Endothelial cell of umbilical vein (primary cell): ENCODE measurements at regions of chr6 and their contacts with region 1.

Region 1: DNA sequence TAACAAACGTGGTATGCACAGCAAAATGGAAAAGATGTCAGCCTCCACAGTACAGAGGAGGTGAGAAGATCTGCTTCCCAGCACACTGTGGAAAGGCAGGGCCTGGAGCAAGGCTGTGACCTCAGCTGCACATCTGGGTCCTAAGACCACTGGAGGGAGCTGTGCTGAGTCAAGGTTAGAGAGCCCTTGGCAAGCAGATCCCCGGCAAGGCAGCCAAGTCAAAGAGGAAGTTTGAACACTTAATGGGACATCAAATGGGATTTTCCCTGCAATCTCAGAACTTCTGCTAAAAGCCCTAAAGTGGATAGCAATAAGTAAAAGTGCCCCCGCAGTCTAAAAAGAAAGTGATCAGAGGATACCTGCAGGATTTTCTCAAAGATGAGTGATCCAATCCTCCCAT is 39.5 kb downstream of the UNC5CL start:
- DNase-seq: peak; percentile 44
- H3K4me3 ChIP-seq: no peak overlapping the region
- H3K27ac ChIP-seq: no peak overlapping the region
- H3K4me1 ChIP-seq: peaks cover 24% of the 10 kb centered on the region
- H3K27me3 ChIP-seq: peaks cover 0 to 5% of the 10 kb centered on the region in 2 experiments
- CTCF ChIP-seq: peak; percentile 34 to 55
- POLR2A ChIP-seq: no peak

Region 2: GRCh38 chr6:39426088-39426456 is 1573.5 kb before region 1 on chr6:
- CTCF ChIA-PET with region 1: no interaction called
- POLR2A ChIA-PET with region 1: no interaction called
- dilution Hi-C with region 1: no loop called
- intact Hi-C with region 1: loop called (anchors 5 kb)
- DNase-seq: peak; percentile 95
- H3K4me3 ChIP-seq: no peak overlapping the region
- H3K27ac ChIP-seq: peak overlapping the region; percentile 69
- H3K4me1 ChIP-seq: peaks cover 14% of the 10 kb centered on the region
- H3K27me3 ChIP-seq: no peaks in the 10 kb centered on the region
- CTCF ChIP-seq: no peak
- POLR2A ChIP-seq: no peak

Region 3: GRCh38 chr6:40774932-40775331 is 224.6 kb before region 1 on chr6:
- CTCF ChIA-PET with region 1: no interaction called
- POLR2A ChIA-PET with region 1: no interaction called
- dilution Hi-C with region 1: no loop called
- intact Hi-C with region 1: no loop called
- DNase-seq: no peak
- H3K4me3 ChIP-seq: no peak overlapping the region
- H3K27ac ChIP-seq: no peak overlapping the region
- H3K4me1 ChIP-seq: peaks cover 21% of the 10 kb centered on the region
- H3K27me3 ChIP-seq: peaks cover 0 to 2% of the 10 kb centered on the region in 2 experiments
- CTCF ChIP-seq: no peak
- POLR2A ChIP-seq: no peak

Region 4: GRCh38 chr6:40894962-40895799 is 104.4 kb before region 1 on chr6:
- CTCF ChIA-PET with region 1: interaction called, 13 read pairs
- POLR2A ChIA-PET with region 1: no interaction called
- dilution Hi-C with region 1: no loop called
- intact Hi-C with region 1: loop called (anchors 1 kb)
- DNase-seq: peak; percentile 68
- H3K4me3 ChIP-seq: no peak overlapping the region
- H3K27ac ChIP-seq: no peak overlapping the region
- H3K4me1 ChIP-seq: peaks cover 8% of the 10 kb centered on the region
- H3K27me3 ChIP-seq: no peaks in the 10 kb centered on the region
- CTCF ChIP-seq: peak; percentile 65 to 69
- POLR2A ChIP-seq: no peak

Region 5: DNA sequence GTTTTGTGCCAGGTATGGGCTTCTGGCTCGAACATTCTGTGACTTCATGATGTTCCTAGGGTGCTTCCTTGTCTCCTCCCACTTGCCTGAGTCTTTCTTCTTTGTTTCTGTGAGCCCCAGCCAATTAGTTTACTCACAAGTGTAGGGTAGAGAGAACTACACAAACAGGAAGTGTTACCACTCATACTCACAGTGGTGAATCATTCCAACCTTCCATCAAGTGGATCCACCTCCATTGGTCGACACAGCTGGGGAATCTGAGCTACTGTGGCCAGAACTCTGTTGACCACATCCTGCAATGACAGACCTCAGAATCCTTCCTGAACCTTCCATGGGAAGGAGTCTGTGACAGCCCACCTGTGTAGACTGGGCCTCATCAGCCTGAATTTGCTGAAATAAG is 37.3 kb before region 1 on chr6:
- CTCF ChIA-PET with region 1: interaction called, 5 read pairs
- POLR2A ChIA-PET with region 1: no interaction called
- dilution Hi-C with region 1: no loop called
- intact Hi-C with region 1: loop called (anchors 5 kb)
- DNase-seq: peak; percentile 65
- H3K4me3 ChIP-seq: no peak overlapping the region
- H3K27ac ChIP-seq: peak overlapping the region; percentile 27
- H3K4me1 ChIP-seq: peaks cover 4% of the 10 kb centered on the region
- H3K27me3 ChIP-seq: no peaks in the 10 kb centered on the region
- CTCF ChIP-seq: no peak
- POLR2A ChIP-seq: no peak

Region 6: DNA sequence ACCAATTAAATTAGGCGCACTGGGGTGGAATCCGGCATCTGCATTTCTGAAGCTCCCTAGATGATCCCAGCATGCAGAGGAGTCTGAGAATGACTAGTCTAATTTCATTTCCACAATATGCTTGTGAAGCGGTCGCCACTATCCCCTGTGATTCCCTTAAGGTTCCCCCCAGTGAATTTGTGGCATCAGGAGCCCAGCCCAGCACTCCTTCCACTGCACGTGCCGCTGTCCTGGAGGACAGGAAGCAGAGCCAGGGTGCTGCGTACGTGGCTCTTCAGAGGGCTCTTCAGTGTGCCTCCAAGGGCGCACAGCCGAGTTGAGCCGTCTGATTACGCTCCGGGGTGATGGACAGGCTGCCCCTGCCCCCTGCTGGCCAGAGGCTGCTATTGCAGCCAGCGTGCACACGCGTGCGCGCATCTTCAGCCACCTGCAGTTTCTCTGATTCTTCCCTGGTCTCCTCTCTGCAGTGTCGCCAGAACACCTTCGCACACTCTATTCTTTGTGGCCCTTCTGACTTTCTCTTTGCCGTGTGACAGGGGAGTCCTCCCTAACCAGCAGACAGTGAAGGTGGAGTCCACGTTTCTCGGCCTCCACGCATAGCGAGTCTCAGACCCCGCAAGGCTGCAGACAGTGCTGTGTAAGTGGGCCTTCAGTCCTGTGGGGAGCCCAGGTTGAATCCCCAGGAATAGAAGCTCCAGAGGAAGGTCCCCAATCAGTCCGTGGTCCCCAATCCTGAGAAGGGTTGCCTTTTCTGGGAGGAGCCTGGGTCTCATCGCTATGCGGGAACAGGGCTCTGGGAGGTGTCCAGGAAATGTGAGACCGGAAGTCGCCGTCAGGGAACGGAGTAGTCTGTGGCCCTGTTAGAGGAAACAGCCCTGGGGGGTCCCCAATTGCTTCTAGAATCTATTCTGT is 319.3 kb after region 1 on chr6:
- CTCF ChIA-PET with region 1: no interaction called
- POLR2A ChIA-PET with region 1: no interaction called
- dilution Hi-C with region 1: no loop called
- intact Hi-C with region 1: loop called (anchors 2 kb)
- DNase-seq: peak; percentile 74
- H3K4me3 ChIP-seq: peak overlapping the region in 1 of 3 experiments; percentile 4
- H3K27ac ChIP-seq: peak overlapping the region; percentile 60
- H3K4me1 ChIP-seq: peaks cover 22% of the 10 kb centered on the region
- H3K27me3 ChIP-seq: peaks cover 14 to 51% of the 10 kb centered on the region in 2 experiments
- CTCF ChIP-seq: peak; percentile 99 to 100
- POLR2A ChIP-seq: no peak

Region 7: DNA sequence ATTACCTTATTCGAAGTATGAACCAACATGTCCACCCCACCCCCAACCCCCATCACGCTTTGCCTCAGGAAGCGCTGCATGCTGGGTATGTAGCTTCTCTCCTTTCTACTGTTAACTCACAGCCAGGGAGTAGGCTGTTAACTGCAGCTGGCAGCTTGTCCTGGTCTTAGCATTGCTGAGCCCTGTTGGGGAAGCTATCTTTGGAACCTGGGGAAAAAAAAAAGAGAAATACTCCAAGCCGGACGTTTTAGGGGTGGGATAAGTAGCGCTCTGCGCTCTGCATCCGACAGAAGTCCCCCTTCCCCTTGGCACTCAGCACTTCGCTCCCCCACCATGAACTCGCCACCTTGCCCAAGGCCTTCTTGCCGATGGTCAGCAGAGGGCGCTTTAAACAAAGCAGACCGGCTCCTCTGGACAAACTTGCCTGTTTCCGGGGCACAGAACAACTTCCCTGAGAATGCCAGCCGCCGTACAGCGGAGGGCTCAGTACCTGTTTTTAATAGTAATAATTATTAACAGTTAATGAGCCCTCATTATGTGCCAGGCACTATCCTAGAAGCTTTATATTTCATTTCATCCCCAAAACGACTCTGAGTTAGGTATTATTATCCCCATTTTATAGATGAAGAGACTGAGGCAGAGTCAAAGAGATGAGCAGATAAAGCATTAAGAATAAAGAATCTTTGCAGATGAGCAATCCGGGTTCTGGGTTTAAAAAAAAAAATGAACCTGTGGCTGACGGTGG is 603.5 kb after region 1 on chr6:
- CTCF ChIA-PET with region 1: no interaction called
- POLR2A ChIA-PET with region 1: no interaction called
- dilution Hi-C with region 1: no loop called
- intact Hi-C with region 1: no loop called
- DNase-seq: peak; percentile 82
- H3K4me3 ChIP-seq: no peak overlapping the region
- H3K27ac ChIP-seq: no peak overlapping the region
- H3K4me1 ChIP-seq: no peaks in the 10 kb centered on the region
- H3K27me3 ChIP-seq: no peaks in the 10 kb centered on the region
- CTCF ChIP-seq: peak; percentile 89 to 91
- POLR2A ChIP-seq: no peak

Region 8: DNA sequence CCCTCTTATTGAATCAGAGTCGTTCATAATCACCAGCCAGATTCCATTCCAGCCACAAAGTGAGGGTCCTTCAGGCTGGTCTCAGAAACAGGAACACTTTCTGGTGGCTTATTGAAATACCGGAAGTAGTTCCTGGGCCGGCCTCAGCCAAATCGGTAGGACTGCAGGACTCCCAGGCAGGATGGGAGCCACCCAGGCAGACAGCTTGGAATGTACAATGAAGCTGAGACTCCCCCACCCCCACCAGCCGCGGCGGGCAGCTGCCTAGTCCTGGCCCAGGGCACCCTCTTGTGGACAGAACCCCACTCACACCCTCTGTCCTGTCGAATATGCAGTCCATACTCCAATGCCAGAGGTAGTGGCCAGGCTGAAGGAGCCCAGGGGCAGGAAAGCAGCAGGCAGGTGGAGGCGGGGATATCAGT is 682.5 kb after region 1 on chr6:
- CTCF ChIA-PET with region 1: no interaction called
- POLR2A ChIA-PET with region 1: no interaction called
- dilution Hi-C with region 1: no loop called
- intact Hi-C with region 1: no loop called
- DNase-seq: peak; percentile 84
- H3K4me3 ChIP-seq: no peak overlapping the region
- H3K27ac ChIP-seq: no peak overlapping the region
- H3K4me1 ChIP-seq: peaks cover 8% of the 10 kb centered on the region
- H3K27me3 ChIP-seq: no peaks in the 10 kb centered on the region
- CTCF ChIP-seq: peak; percentile 85 to 91
- POLR2A ChIP-seq: no peak